CD14-positive monocyte (primary cell): ENCODE measurements at regions of chr17 and their contacts with region 1.

Region 1: GRCh38 chr17:57987580-57988421 is at the start of gene VEZF1:
- DNase-seq: peak; percentile 64 to 73 (median 69)
- H3K4me3 ChIP-seq: peak within 1 kb of the TSS; percentile 80 to 92 (median 91)
- H3K4me3 Mint-ChIP-seq: peak within 1 kb of the TSS; percentile 95 to 96
- H3K27ac ChIP-seq: peak within 1 kb of the TSS; percentile 79 to 92
- H3K27ac Mint-ChIP-seq: peak within 1 kb of the TSS; percentile 90 to 97 (median 95)
- H3K4me1 ChIP-seq: peaks cover 33 to 53% of the 10 kb centered on the region in 2 donors
- H3K4me1 Mint-ChIP-seq: peaks cover 55% of the 10 kb centered on the region
- H3K27me3 ChIP-seq: no peaks in the 10 kb centered on the region
- H3K27me3 Mint-ChIP-seq: peaks cover 0 to 2% (median 0%) of the 10 kb centered on the region in 3 donors
- CTCF ChIP-seq: no peak
- polyA plus RNA-seq, gene VEZF1: 28.3 to 40.1 (median 29.0) TPM

Region 2: DNA sequence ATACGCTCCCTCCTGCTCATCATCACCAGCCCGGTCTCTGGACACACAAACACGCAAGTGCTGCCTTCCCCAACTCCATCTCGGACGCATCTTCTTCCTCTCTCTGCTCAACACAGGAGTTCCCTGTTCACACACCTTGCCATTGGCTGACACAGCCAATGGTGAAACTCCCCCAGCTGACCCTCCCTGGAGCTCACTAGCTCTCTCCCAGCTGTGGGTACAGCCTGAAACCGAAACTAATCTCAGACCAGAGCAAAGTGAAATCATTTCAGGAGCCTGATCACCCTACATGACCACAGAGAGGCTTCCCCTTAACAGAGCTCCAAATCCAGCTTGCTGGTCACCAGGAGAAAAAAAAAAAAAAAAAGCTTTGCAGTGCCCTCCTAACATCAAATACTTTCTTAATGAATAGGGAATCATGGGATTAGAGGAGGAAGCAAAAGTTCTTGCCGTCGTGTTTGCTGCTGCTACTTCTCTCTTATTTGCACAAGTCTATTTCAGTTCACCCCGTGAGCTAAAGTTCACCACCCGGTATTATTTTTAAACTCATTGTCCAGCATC is 40.9 kb before region 1 on chr17:
- intact Hi-C with region 1: loop called (anchors 2 to 5 kb)
- DNase-seq: peak; percentile 87 to 97 (median 91)
- H3K4me3 ChIP-seq: peak overlapping the region; percentile 3 to 74 (median 28)
- H3K4me3 Mint-ChIP-seq: peak overlapping the region; percentile 75 to 92
- H3K27ac ChIP-seq: peak overlapping the region; percentile 62 to 87
- H3K27ac Mint-ChIP-seq: peak overlapping the region; percentile 91 to 95 (median 92)
- H3K4me1 ChIP-seq: peaks cover 76 to 87% of the 10 kb centered on the region in 2 donors
- H3K4me1 Mint-ChIP-seq: peaks cover 73% of the 10 kb centered on the region
- H3K27me3 ChIP-seq: no peaks in the 10 kb centered on the region
- H3K27me3 Mint-ChIP-seq: peaks cover 0 to 4% (median 4%) of the 10 kb centered on the region in 3 donors
- CTCF ChIP-seq: no peak

Region 3: GRCh38 chr17:58052945-58053846 is 65.4 kb after region 1 on chr17:
- intact Hi-C with region 1: no loop called
- DNase-seq: no peak
- H3K4me3 ChIP-seq: no peak overlapping the region
- H3K4me3 Mint-ChIP-seq: no peak overlapping the region
- H3K27ac ChIP-seq: no peak overlapping the region
- H3K27ac Mint-ChIP-seq: peak overlapping the region in 1 of 7 donors; percentile 28
- H3K4me1 ChIP-seq: no peaks in the 10 kb centered on the region
- H3K4me1 Mint-ChIP-seq: no peaks in the 10 kb centered on the region
- H3K27me3 ChIP-seq: peaks cover 0 to 3% of the 10 kb centered on the region in 2 donors
- H3K27me3 Mint-ChIP-seq: peaks cover 2 to 6% (median 5%) of the 10 kb centered on the region in 3 donors
- CTCF ChIP-seq: no peak